Activated B cell treated with CpG ODN at 0.5 μM for 24 hours (primary cell): ENCODE measurements at regions of chr11 and their contacts with region 1.

Region 1: GRCh38 chr11:20127671-20128527 is 32.4 kb downstream of the DBX1 start:
- DNase-seq: peak; percentile 50
- ATAC-seq: peak; percentile 74
- H3K4me3 Mint-ChIP-seq: no peak overlapping the region
- H3K27ac Mint-ChIP-seq: no peak overlapping the region
- H3K4me1 Mint-ChIP-seq: peaks cover 10% of the 10 kb centered on the region
- H3K27me3 Mint-ChIP-seq: peaks cover 14% of the 10 kb centered on the region
- CTCF ChIP-seq: no peak

Region 2: GRCh38 chr11:19938169-19938856 is 189.6 kb before region 1 on chr11:
- CTCF ChIA-PET with region 1: interaction called, 10 read pairs
- POLR2A ChIA-PET with region 1: no interaction called
- intact Hi-C with region 1: loop called (anchors 1 kb)
- DNase-seq: no peak
- ATAC-seq: peak; percentile 56
- H3K4me3 Mint-ChIP-seq: no peak overlapping the region
- H3K27ac Mint-ChIP-seq: no peak overlapping the region
- H3K4me1 Mint-ChIP-seq: peaks cover 8% of the 10 kb centered on the region
- H3K27me3 Mint-ChIP-seq: peaks cover 9% of the 10 kb centered on the region
- CTCF ChIP-seq: no peak

Region 3: DNA sequence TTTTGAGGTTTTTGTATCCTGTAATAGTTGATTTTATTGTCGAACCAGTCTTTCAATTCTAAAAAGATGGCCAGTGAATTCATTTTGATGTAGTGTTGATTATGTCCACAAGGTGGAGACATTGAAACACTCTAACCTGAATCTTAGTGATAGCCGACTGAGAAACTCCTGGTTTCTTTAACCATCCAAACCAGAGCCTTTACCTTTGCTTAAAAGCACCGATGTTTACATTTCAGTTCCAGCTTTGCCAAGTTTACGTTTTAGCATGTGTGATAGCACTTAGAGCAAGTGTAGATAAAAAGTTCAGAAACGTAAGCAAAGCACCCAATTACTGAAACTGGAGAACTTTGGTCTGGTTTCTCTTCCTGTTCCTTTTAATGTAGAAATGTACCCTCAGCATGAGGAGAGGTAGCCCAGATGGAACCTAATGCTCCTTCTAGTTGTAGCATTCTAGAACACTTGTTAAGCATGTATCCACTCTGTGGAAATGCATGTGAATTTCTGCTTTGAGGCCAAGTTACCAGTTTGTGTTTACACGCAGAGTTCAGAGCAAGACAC is 176.3 kb before region 1 on chr11:
- CTCF ChIA-PET with region 1: interaction called, 14 read pairs
- POLR2A ChIA-PET with region 1: no interaction called
- intact Hi-C with region 1: loop called (anchors 1 kb)
- DNase-seq: no peak
- ATAC-seq: peak; percentile 68
- H3K4me3 Mint-ChIP-seq: peak overlapping the region; percentile 74
- H3K27ac Mint-ChIP-seq: no peak overlapping the region
- H3K4me1 Mint-ChIP-seq: peaks cover 10% of the 10 kb centered on the region
- H3K27me3 Mint-ChIP-seq: peaks cover 15% of the 10 kb centered on the region
- CTCF ChIP-seq: no peak

Region 4: GRCh38 chr11:20116825-20117224 is 11.1 kb before region 1 on chr11:
- CTCF ChIA-PET with region 1: interaction called, 12 read pairs
- POLR2A ChIA-PET with region 1: no interaction called
- intact Hi-C with region 1: no loop called
- DNase-seq: no peak
- ATAC-seq: no peak
- H3K4me3 Mint-ChIP-seq: no peak overlapping the region
- H3K27ac Mint-ChIP-seq: no peak overlapping the region
- H3K4me1 Mint-ChIP-seq: peaks cover 3% of the 10 kb centered on the region
- H3K27me3 Mint-ChIP-seq: peaks cover 16% of the 10 kb centered on the region
- CTCF ChIP-seq: no peak

Region 5: DNA sequence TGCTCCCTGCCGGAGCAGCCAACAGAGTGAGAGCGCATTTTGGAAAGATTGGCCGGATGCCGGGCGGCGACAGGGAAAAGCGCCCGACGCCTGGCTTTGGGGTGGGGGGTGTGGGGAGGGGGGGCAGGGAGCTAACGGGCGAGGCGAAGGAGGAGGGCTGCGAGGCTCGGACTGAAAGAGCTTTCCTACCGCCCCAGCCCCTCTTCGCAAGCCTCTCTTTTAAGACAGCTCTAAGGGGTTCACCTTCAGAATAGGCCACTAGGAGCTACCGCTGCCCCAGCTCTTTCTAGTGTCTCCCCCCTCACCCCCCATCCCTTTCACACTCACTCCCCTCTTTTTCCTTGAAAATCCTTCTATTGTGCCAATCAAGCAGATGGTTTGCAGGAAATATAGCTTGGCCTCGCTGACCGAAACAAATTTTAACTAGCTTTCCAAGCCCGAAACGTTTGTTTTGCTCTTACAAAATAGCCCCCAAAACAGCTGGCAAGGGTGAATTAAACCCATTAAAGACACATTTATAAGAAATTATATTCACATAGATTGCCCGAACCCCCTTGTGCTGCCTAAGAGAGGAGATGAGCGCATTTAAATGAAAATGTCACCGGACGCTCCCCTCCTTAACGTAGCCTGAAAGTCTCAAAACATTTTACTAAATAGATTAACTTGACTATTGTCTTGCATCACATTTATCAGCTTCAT is 36.0 kb after region 1 on chr11:
- CTCF ChIA-PET with region 1: no interaction called
- POLR2A ChIA-PET with region 1: no interaction called
- intact Hi-C with region 1: no loop called
- DNase-seq: no peak
- ATAC-seq: no peak
- H3K4me3 Mint-ChIP-seq: no peak overlapping the region
- H3K27ac Mint-ChIP-seq: no peak overlapping the region
- H3K4me1 Mint-ChIP-seq: peaks cover 10% of the 10 kb centered on the region
- H3K27me3 Mint-ChIP-seq: peaks cover 74% of the 10 kb centered on the region
- CTCF ChIP-seq: no peak

Region 6: DNA sequence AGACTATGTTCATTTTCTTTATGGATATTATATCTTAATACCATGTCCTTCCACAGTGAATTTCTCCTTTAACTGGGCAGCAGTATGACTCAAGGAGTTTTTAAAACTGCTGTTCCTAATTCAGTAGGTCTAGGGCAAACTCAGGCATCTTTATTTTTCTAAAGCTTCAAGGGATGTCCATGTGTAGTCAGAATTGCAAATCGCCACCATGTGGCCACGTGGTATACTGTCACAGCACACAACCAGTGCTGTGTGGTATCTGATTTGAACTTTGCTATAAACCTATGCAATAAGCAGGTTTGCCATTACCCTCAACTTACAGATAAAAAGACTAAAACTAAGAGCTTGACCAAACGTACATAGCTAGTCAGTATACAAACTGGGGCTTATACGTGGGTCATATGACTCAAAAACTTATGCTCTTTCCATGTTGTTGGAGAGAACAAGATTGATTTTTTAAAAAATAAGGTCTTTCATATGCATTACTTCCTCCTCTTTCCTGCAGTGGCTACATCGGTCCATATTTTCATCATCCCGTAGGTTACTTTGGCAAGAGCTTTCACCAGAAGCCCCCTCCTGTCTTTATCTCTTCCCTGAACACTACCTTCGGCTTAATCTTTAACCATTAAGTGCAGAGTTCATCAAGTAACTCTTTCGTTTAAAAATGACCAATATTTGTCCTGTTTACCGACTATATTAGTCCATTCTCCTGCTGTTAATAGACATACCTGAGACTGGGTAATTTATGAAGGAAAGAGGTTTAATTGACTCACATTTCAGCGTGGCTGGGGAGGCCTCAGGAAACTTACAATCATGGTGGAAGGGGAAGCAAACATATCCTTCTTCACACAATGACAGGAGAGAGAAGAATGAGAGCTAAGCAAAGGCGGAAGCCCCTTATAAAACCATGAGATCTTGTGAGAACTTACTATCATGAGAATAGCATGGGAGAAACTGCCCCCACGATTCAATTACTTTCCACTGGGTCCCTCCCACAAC is 227.6 kb after region 1 on chr11:
- CTCF ChIA-PET with region 1: interaction called, 33 read pairs
- POLR2A ChIA-PET with region 1: no interaction called
- intact Hi-C with region 1: loop called (anchors 1 kb)
- DNase-seq: no peak
- ATAC-seq: peak; percentile 80
- H3K4me3 Mint-ChIP-seq: no peak overlapping the region
- H3K27ac Mint-ChIP-seq: no peak overlapping the region
- H3K4me1 Mint-ChIP-seq: peaks cover 8% of the 10 kb centered on the region
- H3K27me3 Mint-ChIP-seq: peaks cover 7% of the 10 kb centered on the region
- CTCF ChIP-seq: no peak

Region 7: GRCh38 chr11:20609727-20610707 is 482.1 kb after region 1 on chr11:
- CTCF ChIA-PET with region 1: interaction called, 11 read pairs
- POLR2A ChIA-PET with region 1: no interaction called
- intact Hi-C with region 1: no loop called
- DNase-seq: peak; percentile 29
- ATAC-seq: peak; percentile 68
- H3K4me3 Mint-ChIP-seq: peak overlapping the region; percentile 58
- H3K27ac Mint-ChIP-seq: no peak overlapping the region
- H3K4me1 Mint-ChIP-seq: peaks cover 7% of the 10 kb centered on the region
- H3K27me3 Mint-ChIP-seq: peaks cover 69% of the 10 kb centered on the region
- CTCF ChIP-seq: no peak